ENCODE measurements at regions of chr13 and their contacts with region 1.

Region 1: DNA sequence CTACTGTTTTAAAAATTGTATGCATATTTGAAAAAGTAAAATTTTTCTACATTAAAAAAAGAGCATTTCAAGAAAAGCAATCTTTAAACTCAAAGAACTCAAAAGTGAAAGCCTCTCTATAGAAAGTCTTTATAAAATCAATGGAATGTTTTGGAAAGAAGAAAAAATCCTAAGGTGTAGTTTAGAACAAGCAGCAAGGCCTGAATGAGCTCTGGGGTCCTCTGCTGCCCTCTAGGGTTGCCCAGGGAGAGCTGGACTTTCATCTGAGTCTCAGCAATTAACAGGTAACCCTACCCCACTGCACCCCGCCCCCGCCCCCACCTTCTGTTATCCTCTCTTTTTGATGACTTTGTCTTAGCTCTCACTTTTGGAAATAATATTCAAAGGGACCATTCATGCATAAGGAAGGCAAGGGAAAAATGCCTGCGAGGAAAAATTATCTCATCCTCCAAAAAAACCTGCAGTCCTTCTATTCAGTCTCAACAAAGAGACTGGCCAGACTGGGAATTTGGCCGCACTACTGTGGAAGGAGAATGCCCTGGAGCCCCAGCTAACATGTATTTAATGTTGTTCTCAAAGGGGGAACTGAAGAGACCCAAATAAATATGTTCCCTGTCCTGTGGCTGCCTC is 24.1 kb downstream of the SLC25A30 start:
- DNase-seq: peak; percentile 68 to 76 (median 71)
- H3K4me3 ChIP-seq: peak overlapping the region in 2 of 7 experiments; percentile 26 to 44
- H3K27ac ChIP-seq: no peak overlapping the region
- H3K4me1 ChIP-seq: peaks cover 25 to 61% (median 49%) of the 10 kb centered on the region in 4 experiments
- H3K27me3 ChIP-seq: no peaks in the 10 kb centered on the region

Region 2: DNA sequence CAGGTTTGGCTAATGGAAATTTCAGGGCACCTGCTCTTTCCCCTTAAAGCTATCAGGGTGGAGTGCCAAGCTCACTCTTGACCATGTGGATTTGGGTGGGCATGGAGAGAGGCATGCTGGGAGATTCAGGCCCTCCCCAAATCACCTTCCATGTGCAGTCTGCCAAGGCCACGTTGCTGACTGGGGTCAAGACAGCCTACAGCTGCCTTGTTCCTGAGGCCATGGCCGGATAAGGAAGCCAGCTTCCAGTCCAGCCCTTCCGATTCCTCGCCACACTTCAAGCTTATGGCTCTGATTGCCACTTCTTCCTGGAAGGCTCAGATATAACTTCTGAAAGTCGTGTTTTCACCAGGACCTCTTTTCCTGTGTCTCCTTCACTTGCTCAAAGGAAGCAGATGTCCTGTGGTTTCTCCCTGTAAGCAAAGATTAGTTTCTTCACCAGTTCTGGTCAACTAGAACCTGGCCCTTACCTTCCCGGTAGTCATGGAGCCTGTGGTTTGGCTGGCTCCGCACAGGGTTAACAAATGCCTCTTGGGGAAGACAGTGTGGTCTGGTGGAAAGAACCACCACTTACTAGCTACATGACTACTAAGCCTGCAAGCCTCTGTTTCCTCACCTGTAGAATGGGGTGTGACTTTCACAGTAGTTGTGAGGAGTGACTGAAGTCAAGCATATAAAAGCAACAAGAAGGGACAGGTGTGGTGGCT is 36.9 kb before region 1 on chr13:
- CTCF ChIA-PET with region 1: interaction called, 22 read pairs
- POLR2A ChIA-PET with region 1: interaction called, 3 read pairs
- DNase-seq: peak; percentile 67 to 98 (median 97)
- H3K4me3 ChIP-seq: no peak overlapping the region
- H3K27ac ChIP-seq: no peak overlapping the region
- H3K4me1 ChIP-seq: peaks cover 0 to 19% (median 16%) of the 10 kb centered on the region in 4 experiments
- H3K27me3 ChIP-seq: no peaks in the 10 kb centered on the region

Region 3: DNA sequence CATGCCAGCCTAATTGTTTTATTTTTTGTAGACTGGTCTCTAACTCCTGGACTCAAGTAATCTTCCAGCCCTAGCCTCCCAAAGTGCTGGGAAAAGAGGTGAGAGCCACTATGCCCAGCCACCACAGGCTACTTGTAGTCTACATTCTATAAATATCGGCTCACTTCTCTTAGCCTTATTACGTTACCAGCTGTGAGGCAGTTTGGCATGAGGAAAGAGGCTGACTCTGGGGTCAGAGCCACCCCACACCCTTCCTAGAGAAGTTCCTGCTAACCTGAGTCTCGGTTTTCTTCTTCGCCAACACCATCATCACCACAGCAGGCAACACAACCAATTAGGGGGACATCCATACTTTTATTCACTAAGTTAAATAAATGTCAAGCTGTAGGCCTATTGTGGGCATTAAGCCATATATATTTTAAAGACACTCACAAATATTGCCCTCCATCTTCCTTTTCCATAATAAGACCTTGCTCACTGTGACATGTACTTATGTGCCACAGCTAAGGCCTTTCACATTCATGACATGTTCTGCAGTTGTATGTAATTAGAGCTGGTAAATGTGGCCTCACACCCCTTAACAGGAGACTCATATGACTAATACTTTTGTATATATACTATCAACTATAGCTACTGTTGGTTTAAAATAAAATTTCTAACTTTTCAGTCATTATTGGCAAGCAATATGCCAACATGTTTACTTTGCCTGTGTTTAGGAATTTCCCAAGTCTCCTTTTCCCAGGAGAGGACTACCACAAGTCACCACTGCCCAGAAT is 18.4 kb after region 1 on chr13:
- CTCF ChIA-PET with region 1: interaction called, 77 read pairs
- POLR2A ChIA-PET with region 1: interaction called, 6 read pairs
- DNase-seq: peak in 2 of 3 donors; percentile 36 to 50
- H3K4me3 ChIP-seq: peak overlapping the region in 1 of 7 experiments; percentile 7
- H3K27ac ChIP-seq: no peak overlapping the region
- H3K4me1 ChIP-seq: peaks cover 9 to 48% (median 28%) of the 10 kb centered on the region in 4 experiments
- H3K27me3 ChIP-seq: no peaks in the 10 kb centered on the region

Region 4: DNA sequence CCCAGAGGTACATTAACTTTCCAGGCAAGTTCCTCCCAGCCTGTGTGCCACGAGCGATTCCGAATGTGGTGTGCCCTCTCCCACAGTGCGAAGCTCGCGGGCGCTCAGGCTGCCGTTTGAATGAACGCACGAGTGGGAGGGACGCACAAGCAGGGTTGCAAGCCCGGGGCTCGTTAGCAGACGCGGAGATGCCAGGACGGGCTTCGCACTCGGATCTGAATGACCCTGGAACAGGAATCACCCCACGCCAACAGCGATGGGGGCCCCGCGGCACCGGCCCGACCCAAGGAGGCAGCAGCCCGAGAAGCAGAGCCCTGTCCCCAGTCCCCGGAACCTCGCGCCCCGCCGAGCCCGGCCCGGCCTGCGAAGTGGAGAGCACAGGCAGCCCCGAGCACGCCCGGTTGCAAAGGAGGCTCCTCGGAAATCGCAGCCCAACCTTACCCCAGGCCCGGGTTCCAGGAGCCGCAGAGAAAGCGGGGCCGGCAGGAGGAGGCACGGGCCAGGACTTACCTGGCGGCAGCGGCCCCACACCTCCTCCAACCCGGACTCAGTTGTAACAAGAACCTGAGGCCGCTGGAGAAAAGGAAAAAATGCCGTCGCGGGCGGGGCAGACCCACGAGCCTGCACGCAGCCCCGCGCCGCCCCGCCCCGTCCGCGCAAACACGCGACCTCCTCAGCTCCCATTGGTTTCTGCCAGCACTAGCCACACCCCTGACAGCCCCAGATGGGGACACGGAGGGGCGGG is 23.9 kb after region 1 on chr13 and contains the start of gene SLC25A30:
- CTCF ChIA-PET with region 1: interaction called, 77 read pairs
- POLR2A ChIA-PET with region 1: interaction called, 6 read pairs
- DNase-seq: peak; percentile 95 to 96 (median 96)
- H3K4me3 ChIP-seq: peak within 1 kb of the TSS; percentile 70 to 95 (median 89)
- H3K27ac ChIP-seq: peak within 1 kb of the TSS; percentile 86 to 94
- H3K4me1 ChIP-seq: peaks cover 9 to 39% (median 25%) of the 10 kb centered on the region in 4 experiments
- H3K27me3 ChIP-seq: no peaks in the 10 kb centered on the region

Region 5: GRCh38 chr13:45658586-45659235 is 264.7 kb after region 1 on chr13:
- CTCF ChIA-PET with region 1: no interaction called
- POLR2A ChIA-PET with region 1: no interaction called
- DNase-seq: no peak
- H3K4me3 ChIP-seq: no peak overlapping the region
- H3K27ac ChIP-seq: no peak overlapping the region
- H3K4me1 ChIP-seq: no peaks in the 10 kb centered on the region
- H3K27me3 ChIP-seq: no peaks in the 10 kb centered on the region